SK-N-SH (cell line): ENCODE measurements at regions of chr22 and their contacts with region 1.

Region 1: GRCh38 chr22:22463855-22464540 is 44.5 kb downstream of the ZNF280B start:
- DNase-seq: peak; percentile 67
- H3K4me3 ChIP-seq: peak overlapping the region in 1 of 2 experiments; percentile 20; a peak in 1 of 4 replicates
- H3K27ac ChIP-seq: no peak overlapping the region
- H3K4me1 ChIP-seq: peaks cover 0 to 2% of the 10 kb centered on the region in 2 experiments; a peak in 1 of 4 replicates
- H3K27me3 ChIP-seq: peaks cover 6% of the 10 kb centered on the region; the same call in 1 of the 2 replicates
- CTCF ChIP-seq: peak; percentile 84
- EP300 ChIP-seq: no peak
- RAD21 ChIP-seq: peak; percentile 93

Region 2: GRCh38 chr22:22474733-22475132 is 10.7 kb after region 1 on chr22:
- CTCF ChIA-PET with region 1: interaction called, 20 read pairs
- POLR2A ChIA-PET with region 1: no interaction called
- DNase-seq: no peak
- H3K4me3 ChIP-seq: no peak overlapping the region
- H3K27ac ChIP-seq: no peak overlapping the region
- H3K4me1 ChIP-seq: no peaks in the 10 kb centered on the region
- H3K27me3 ChIP-seq: no peaks in the 10 kb centered on the region
- CTCF ChIP-seq: no peak
- EP300 ChIP-seq: no peak
- RAD21 ChIP-seq: no peak

Region 3: GRCh38 chr22:22508274-22509176 is 44.5 kb after region 1 on chr22 and contains the start of gene ZNF280B:
- CTCF ChIA-PET with region 1: interaction called, 27 read pairs
- POLR2A ChIA-PET with region 1: no interaction called
- DNase-seq: peak; percentile 94
- H3K4me3 ChIP-seq: peak within 1 kb of the TSS; percentile 76 to 82
- H3K27ac ChIP-seq: peak within 1 kb of the TSS in 1 of 2 experiments; percentile 64; a peak in 2 of 4 replicates
- H3K4me1 ChIP-seq: peaks cover 0 to 2% of the 10 kb centered on the region in 2 experiments; a peak in 1 of 4 replicates
- H3K27me3 ChIP-seq: no peaks in the 10 kb centered on the region
- CTCF ChIP-seq: peak; percentile 75
- EP300 ChIP-seq: no peak
- RAD21 ChIP-seq: no peak
- polyA plus RNA-seq, gene ZNF280B: 0.82 and 1.2 TPM in 2 replicates

Region 4: GRCh38 chr22:22576244-22576988 is 112.4 kb after region 1 on chr22:
- CTCF ChIA-PET with region 1: interaction called, 34 read pairs
- POLR2A ChIA-PET with region 1: no interaction called
- DNase-seq: peak; percentile 79
- H3K4me3 ChIP-seq: peak overlapping the region in 1 of 2 experiments; percentile 24; a peak in 1 of 4 replicates
- H3K27ac ChIP-seq: no peak overlapping the region
- H3K4me1 ChIP-seq: no peaks in the 10 kb centered on the region
- H3K27me3 ChIP-seq: peaks cover 18% of the 10 kb centered on the region; the same call in 1 of the 2 replicates
- CTCF ChIP-seq: peak; percentile 76
- EP300 ChIP-seq: no peak
- RAD21 ChIP-seq: peak; percentile 68

Region 5: DNA sequence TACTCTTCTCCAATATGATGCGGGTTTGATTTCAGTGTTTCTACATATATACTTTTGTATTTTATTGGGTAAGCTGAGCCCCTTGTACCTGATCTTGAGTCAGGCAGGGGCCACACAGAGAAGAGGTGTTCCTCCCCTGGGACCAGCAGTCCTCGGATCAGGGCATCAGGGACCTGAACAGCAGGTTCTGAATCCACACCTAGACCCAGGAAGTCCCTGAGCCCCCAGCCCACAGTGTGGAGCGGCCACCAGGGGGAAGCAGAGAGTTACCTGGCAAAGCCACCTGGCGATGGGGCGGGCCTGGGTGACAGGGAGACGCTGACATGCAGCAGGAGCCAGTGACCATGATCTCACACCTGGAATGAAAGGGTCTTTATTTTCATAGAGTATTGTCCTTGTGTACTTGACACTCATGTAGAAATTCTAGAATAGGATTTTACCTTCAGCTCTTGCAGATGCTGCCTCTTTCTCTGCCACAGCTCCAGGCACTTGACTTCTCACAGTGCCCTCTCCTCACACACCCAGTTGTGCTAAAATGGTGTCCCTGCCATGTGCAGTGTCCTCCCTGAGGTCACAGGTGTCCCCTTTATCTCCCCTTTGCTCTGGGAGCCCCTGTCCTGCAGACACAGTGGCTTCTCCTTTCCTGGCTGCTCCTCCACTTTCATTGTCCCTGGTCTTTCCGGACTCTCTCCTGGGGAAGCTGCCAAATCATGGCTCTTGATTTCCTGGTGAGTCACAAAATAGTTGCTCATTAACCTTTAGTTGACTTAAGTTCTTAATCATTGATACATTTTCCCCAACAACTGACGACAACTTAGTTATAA is 228.9 kb after region 1 on chr22:
- CTCF ChIA-PET with region 1: interaction called, 11 read pairs
- POLR2A ChIA-PET with region 1: no interaction called
- DNase-seq: peak; percentile 54
- H3K4me3 ChIP-seq: no peak overlapping the region
- H3K27ac ChIP-seq: no peak overlapping the region
- H3K4me1 ChIP-seq: no peaks in the 10 kb centered on the region
- H3K27me3 ChIP-seq: no peaks in the 10 kb centered on the region
- CTCF ChIP-seq: peak; percentile 47
- EP300 ChIP-seq: no peak
- RAD21 ChIP-seq: no peak

Region 6: DNA sequence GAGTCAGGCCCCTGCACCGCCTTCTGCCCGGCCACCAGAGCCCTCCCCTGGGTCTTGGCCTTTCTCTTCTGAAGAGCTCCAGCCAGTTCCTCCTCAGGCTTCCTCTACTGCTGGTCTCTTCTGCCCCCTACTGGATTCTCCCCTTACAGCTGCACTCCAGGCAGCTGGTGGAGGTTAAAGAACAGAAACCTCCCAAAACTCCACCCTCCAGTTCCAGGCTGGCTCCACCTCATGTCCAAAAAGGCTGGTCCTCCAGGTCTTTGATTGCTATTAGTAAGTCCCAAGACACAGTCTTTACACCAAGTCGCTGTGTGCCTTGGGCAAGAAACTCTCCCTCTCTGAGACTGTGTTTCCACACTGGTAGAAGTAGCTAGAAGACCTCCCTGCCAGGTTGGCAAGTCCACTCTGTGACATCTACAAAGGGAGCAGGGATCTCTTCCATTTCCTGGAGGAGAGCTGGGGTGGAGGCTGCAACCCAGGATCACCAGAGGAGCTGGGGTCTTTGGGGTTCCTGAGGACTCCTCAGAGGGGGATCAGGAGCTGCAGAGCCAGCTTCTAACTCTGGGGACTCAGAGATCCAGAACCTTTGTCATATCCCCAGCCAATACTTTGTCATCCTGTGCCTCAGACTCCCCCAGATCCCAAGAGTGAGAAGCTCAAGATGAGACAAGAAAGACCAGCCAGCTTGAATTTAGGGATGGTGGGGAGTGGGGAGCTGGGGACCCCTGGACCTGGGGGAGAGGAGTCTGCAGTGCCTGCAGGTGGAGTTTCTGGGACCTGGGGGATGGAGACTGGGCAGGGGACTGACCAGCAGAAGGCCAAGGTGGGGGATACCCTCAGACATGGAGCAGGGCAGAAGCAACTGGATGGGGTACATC is 420.3 kb after region 1 on chr22:
- CTCF ChIA-PET with region 1: interaction called, 14 read pairs
- POLR2A ChIA-PET with region 1: no interaction called
- DNase-seq: peak; percentile 79
- H3K4me3 ChIP-seq: no peak overlapping the region; a peak in 1 of 4 replicates
- H3K27ac ChIP-seq: no peak overlapping the region
- H3K4me1 ChIP-seq: peaks cover 0 to 33% of the 10 kb centered on the region in 2 experiments; a peak in 2 of 4 replicates
- H3K27me3 ChIP-seq: peaks cover 10% of the 10 kb centered on the region
- CTCF ChIP-seq: peak; percentile 59
- EP300 ChIP-seq: no peak
- RAD21 ChIP-seq: peak; percentile 91